ENCODE measurements at regions of chr1 and their contacts with region 1.

Region 1: GRCh38 chr1:180881806-180882509 is 30.7 kb upstream of the KIAA1614 start:
- DNase-seq: no peak
- ATAC-seq: peak in 3 of 4 donors; percentile 45 to 69 (median 55)
- H3K4me3 ChIP-seq: no peak overlapping the region
- H3K27ac ChIP-seq: peak overlapping the region in 1 of 12 donors; percentile 33
- H3K4me1 ChIP-seq: peaks cover 0 to 8% (median 0%) of the 10 kb centered on the region in 12 donors
- H3K27me3 ChIP-seq: no peaks in the 10 kb centered on the region
- CTCF ChIP-seq: peak in 11 of 12 donors; percentile 28 to 63 (median 47)
- POLR2A ChIP-seq: no peak

Region 2: GRCh38 chr1:180751921-180752320 is 130.0 kb before region 1 on chr1:
- intact Hi-C with region 1: no loop called
- DNase-seq: no peak
- ATAC-seq: no peak
- H3K4me3 ChIP-seq: no peak overlapping the region
- H3K27ac ChIP-seq: no peak overlapping the region
- H3K4me1 ChIP-seq: peaks cover 0 to 16% (median 0%) of the 10 kb centered on the region in 12 donors
- H3K27me3 ChIP-seq: no peaks in the 10 kb centered on the region
- CTCF ChIP-seq: no peak
- POLR2A ChIP-seq: no peak

Region 3: GRCh38 chr1:181002582-181003172 is 120.7 kb after region 1 on chr1:
- intact Hi-C with region 1: loop called in 1 of 10 experiments (anchors 10 kb)
- DNase-seq: no peak
- ATAC-seq: no peak
- H3K4me3 ChIP-seq: no peak overlapping the region
- H3K27ac ChIP-seq: no peak overlapping the region
- H3K4me1 ChIP-seq: no peaks in the 10 kb centered on the region
- H3K27me3 ChIP-seq: no peaks in the 10 kb centered on the region
- CTCF ChIP-seq: no peak
- POLR2A ChIP-seq: no peak

Measured in heart left ventricle (tissue), 16 donors.